ENCODE measurements at regions of chr13 and their contacts with region 1.

Region 1: GRCh38 chr13:29758531-29759114 is 91.8 kb downstream of the UBL3 start:
- DNase-seq: no peak
- H3K4me3 ChIP-seq: no peak overlapping the region
- CTCF ChIP-seq: no peak

Region 2: DNA sequence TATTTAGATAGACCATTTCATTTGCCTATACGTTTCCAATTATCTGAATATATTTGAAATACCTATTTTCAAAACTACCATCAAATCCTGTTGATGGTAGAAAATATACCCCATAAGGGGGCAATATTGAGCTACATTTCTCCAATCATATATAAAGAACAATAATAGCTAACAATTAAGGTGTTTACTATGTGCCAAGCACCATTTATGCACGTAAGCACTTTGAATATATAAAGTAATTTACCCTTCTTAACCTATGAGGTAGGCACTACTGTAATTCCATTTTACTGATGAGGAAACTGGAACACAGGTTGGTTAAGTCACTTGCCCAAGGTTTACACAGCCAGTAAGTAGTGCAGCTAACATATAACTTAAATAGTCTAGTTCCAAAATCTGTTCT is 12.6 kb after region 1 on chr13:
- CTCF ChIA-PET with region 1: interaction called, 17 read pairs
- POLR2A ChIA-PET with region 1: no interaction called
- DNase-seq: no peak
- H3K4me3 ChIP-seq: no peak overlapping the region
- CTCF ChIP-seq: peak; percentile 4

Region 3: DNA sequence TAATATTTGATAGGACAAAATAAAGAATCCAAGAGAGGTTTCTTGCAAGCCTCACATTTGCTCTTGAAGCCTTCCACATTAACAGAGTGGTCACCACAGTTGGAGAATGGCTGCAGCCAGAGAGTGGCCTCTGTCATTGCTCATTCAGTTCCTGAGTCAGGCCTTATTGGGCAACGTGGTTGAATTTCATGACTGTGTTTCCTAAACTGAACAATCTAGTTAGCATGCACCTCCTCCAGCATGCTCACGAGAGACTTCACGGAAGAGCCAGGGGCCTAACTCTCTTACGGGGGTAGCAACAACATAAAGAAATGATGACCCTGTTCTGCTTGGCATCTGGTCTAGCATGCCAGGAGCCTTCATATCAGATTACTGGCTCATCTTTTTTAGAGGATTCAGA is 101.3 kb after region 1 on chr13:
- CTCF ChIA-PET with region 1: no interaction called
- POLR2A ChIA-PET with region 1: no interaction called
- DNase-seq: no peak
- H3K4me3 ChIP-seq: no peak overlapping the region
- CTCF ChIP-seq: no peak

Measured in AG04449 (cell line).